ENCODE measurements at regions of chr6 and their contacts with region 1.

Region 1: DNA sequence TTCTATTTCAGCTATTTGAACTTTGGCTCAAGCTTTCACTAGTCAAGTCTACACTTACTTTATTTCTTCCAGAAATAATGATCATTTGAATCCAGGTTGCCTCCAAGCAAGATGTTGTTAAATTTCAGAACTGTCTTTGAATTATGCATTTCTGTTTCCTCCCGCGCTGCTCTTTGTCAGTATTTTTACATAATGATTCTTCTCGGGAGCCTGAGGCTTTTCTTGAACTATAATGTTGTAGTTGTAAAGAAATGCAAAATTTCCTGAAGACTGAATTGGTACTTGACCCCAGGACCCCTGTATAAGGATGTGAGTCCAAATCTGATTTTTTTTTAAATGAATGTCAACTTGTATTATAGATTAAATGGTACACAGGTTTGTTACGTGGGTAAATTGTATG is 80.4 kb downstream of the ARMC2 start:
- DNase-seq: no peak
- ATAC-seq: no peak
- H3K4me3 ChIP-seq: no peak overlapping the region
- H3K4me3 Mint-ChIP-seq: no peak overlapping the region
- H3K27ac ChIP-seq: no peak overlapping the region
- H3K27ac Mint-ChIP-seq: no peak overlapping the region
- H3K4me1 ChIP-seq: peaks cover 3 to 12% of the 10 kb centered on the region in 2 experiments
- H3K4me1 Mint-ChIP-seq: peaks cover 20 to 24% (median 22%) of the 10 kb centered on the region in 3 donors
- H3K27me3 ChIP-seq: no peaks in the 10 kb centered on the region
- H3K27me3 Mint-ChIP-seq: no peaks in the 10 kb centered on the region

Region 2: GRCh38 chr6:108942556-108943492 is 14.2 kb after region 1 on chr6:
- CTCF ChIA-PET with region 1: interaction called in 1 of 2 experiments, 3 read pairs
- POLR2A ChIA-PET with region 1: interaction called in 1 of 2 experiments, 15 read pairs
- DNase-seq: peak; percentile 13 to 85 (median 67)
- ATAC-seq: peak; percentile 96 to 100 (median 100)
- H3K4me3 ChIP-seq: peak overlapping the region; percentile 4 to 51
- H3K4me3 Mint-ChIP-seq: peak overlapping the region; percentile 55 to 68 (median 66)
- H3K27ac ChIP-seq: peak overlapping the region; percentile 78
- H3K27ac Mint-ChIP-seq: peak overlapping the region; percentile 87 to 88
- H3K4me1 ChIP-seq: peaks cover 33 to 50% of the 10 kb centered on the region in 2 experiments
- H3K4me1 Mint-ChIP-seq: peaks cover 57 to 68% (median 59%) of the 10 kb centered on the region in 3 donors
- H3K27me3 ChIP-seq: no peaks in the 10 kb centered on the region
- H3K27me3 Mint-ChIP-seq: no peaks in the 10 kb centered on the region